HEK293 (cell line): ENCODE measurements at regions of chr3 and their contacts with region 1.

Region 1: GRCh38 chr3:100254168-100254777 is 6.5 kb upstream of the TBC1D23 start:
- H3K4me3 ChIP-seq: no peak overlapping the region
- H3K27ac ChIP-seq: no peak overlapping the region
- H3K4me1 ChIP-seq: no peaks in the 10 kb centered on the region
- CTCF ChIP-seq: peak; percentile 41; the same call in 1 of the 2 replicates

Region 2: GRCh38 chr3:99833617-99834205 is 420.6 kb before region 1 on chr3:
- CTCF ChIA-PET with region 1: interaction called, 23 read pairs
- POLR2A ChIA-PET with region 1: no interaction called
- H3K4me3 ChIP-seq: no peak overlapping the region
- H3K27ac ChIP-seq: no peak overlapping the region
- H3K4me1 ChIP-seq: peaks cover 6% of the 10 kb centered on the region; the same call in 1 of the 2 replicates
- CTCF ChIP-seq: no peak

Region 3: DNA sequence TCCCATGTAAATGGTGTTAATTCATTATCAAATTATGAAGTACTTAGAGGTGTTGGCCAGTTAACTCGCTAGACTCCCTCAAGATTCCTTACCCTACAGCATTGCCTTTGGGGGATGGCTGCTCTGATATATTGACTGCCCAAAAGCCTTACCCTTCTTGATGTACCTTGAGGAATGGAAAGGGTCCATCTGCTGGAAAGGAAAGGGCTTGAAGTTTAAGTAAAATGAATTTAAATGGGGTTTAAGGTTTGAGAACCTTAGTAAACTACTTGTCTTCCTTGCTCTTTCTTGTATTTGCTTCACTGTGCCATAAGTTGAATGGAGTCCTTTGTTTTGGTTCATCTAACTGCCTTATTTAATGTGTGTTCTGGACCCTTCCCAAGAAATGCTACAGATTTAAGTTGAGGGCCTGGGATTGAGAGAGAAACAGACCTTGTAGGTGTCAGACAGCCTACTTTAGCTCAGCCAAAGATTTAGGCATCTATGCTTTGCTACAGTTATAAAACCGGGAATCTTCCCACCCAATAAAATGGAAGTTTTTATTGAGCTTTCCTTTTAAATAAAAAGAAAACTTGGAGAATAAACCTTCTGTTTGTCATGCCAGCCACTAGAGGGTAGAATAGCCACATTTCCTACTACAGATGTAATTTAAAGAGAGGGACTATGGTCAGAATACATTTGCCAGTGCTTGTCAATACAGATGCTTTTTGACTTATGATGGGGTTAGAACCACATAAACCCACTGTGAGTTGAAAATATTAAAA is 411.3 kb before region 1 on chr3:
- CTCF ChIA-PET with region 1: interaction called, 20 read pairs
- POLR2A ChIA-PET with region 1: no interaction called
- H3K4me3 ChIP-seq: no peak overlapping the region
- H3K27ac ChIP-seq: no peak overlapping the region
- H3K4me1 ChIP-seq: no peaks in the 10 kb centered on the region
- CTCF ChIP-seq: peak; percentile 19; the same call in 1 of the 2 replicates

Region 4: GRCh38 chr3:100068826-100069225 is 185.4 kb before region 1 on chr3:
- CTCF ChIA-PET with region 1: interaction called, 17 read pairs
- POLR2A ChIA-PET with region 1: no interaction called
- H3K4me3 ChIP-seq: no peak overlapping the region
- H3K27ac ChIP-seq: no peak overlapping the region
- H3K4me1 ChIP-seq: no peaks in the 10 kb centered on the region
- CTCF ChIP-seq: peak; percentile 26; the same call in 1 of the 2 replicates

Region 5: DNA sequence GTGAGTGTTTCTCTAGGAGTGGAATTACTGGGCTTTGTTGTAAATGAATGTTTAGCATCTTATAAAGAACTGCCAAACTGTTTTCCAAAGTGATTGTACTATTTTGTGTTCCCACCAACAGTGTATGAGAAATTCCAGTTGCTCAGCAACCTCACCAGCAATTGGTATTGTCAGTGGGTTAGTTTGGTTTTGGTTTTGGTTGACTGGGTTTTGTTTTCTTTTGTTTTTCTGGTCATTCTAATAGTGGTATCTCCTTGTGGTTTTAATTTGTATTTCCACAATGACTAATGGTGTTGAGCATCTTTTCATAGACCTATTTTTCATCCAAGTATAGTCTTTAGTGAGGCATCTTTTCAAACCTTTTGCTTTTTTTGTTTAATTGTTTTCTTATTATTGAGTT is 167.1 kb before region 1 on chr3:
- CTCF ChIA-PET with region 1: no interaction called
- POLR2A ChIA-PET with region 1: no interaction called
- H3K4me3 ChIP-seq: no peak overlapping the region
- H3K27ac ChIP-seq: no peak overlapping the region
- H3K4me1 ChIP-seq: no peaks in the 10 kb centered on the region
- CTCF ChIP-seq: no peak